HEK293T (cell line): ENCODE measurements at regions of chr1 and their contacts with region 1.

Region 1: DNA sequence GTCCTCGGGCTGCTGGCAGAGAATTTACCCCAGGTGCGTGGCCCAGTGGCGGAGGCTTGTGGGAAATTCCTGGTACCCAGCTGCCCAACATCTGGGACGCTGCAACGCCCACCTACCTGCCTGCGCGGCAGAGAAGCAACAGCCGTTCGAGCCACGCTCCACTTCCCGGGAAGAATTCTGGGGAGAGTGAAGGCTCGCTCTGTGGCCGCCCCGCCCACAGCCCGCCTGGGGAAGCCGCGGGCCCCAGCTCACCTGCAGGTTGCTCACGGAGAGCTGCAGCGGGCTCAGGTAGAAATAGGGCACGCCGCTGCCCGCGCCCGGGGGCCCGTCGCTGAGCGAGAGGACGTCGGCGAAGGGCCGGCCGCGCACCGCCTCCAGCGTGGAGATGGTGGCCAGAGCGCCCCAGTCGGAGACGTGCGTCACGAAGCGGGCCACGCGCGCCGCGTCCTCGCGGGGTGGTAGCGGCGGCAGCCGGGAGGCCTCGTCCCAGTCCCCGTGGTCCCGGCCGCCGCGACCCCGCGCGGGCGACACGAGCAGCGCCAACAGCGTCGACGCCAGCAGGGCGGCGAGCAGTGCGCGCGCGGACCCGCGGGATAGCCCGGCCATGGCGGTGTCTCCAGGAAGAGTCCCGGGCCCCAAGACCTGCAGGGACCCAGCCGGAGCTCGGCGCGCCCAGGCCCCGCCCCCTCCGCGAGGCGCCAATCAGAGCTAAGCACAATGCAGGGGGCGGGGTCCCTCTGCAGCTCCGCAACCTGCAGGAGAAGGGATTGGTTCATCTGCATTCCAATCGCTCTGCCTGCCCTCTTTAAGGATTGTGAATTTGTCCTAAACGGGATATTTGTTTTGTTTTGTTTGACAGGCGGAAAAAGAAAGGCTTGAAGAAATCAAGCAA is at the start of gene CREG1:
- DNase-seq: peak; percentile 98

Region 2: GRCh38 chr1:167454894-167455785 is 98.2 kb before region 1 on chr1:
- CTCF ChIA-PET with region 1: interaction called, 4 read pairs
- POLR2A ChIA-PET with region 1: interaction called, 12 read pairs
- DNase-seq: peak; percentile 68

Region 3: DNA sequence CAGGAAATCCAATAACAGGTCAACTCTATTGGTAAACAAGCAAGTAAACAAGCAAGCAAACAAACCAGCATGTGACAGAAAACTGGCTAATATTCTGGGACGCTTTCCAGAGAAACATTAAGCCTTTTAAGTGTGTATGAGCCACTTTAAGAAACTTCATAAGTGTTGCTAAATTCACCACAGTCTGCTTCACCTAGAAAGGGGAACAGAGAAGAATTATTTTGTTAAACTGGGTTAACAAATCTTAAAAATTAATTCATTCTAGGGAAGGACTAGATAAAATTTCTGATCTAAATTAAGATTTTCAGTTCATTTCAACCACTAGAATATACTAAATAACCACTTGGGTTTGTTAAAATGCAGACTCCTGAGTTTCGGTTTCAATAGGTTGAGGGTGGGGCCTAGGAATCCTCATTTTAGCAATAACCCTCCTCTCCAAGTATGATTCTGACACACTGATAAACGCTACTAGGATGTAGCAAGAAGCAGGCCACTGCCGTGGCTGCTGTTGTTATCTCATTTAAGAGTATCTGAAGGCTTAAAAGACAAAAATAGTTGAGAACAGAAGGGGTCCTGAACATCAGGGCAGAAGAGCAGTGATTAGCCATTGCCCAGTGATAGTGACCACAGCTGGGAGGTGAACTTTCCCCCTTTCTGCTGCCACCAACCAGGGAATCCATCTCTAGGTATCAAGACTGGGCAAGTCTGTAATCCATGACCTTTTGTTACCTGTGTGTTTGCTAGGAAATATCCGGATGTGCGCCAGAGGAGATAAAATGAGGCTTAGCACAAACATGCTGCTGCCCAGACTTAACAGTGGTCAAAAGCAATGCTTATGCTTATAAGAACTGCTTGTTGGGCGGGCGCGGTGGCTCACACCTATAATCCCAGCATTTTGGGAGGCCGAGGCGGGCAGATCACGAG is 11.0 kb before region 1 on chr1:
- CTCF ChIA-PET with region 1: interaction called, 11 read pairs
- POLR2A ChIA-PET with region 1: interaction called, 4 read pairs
- DNase-seq: no peak

Region 4: GRCh38 chr1:167563579-167564246 is 10.3 kb after region 1 on chr1:
- CTCF ChIA-PET with region 1: interaction called, 7 read pairs
- POLR2A ChIA-PET with region 1: interaction called, 16 read pairs
- DNase-seq: no peak

Region 5: GRCh38 chr1:167623951-167624350 is 70.6 kb after region 1 on chr1:
- CTCF ChIA-PET with region 1: no interaction called
- POLR2A ChIA-PET with region 1: no interaction called
- DNase-seq: no peak

Region 6: DNA sequence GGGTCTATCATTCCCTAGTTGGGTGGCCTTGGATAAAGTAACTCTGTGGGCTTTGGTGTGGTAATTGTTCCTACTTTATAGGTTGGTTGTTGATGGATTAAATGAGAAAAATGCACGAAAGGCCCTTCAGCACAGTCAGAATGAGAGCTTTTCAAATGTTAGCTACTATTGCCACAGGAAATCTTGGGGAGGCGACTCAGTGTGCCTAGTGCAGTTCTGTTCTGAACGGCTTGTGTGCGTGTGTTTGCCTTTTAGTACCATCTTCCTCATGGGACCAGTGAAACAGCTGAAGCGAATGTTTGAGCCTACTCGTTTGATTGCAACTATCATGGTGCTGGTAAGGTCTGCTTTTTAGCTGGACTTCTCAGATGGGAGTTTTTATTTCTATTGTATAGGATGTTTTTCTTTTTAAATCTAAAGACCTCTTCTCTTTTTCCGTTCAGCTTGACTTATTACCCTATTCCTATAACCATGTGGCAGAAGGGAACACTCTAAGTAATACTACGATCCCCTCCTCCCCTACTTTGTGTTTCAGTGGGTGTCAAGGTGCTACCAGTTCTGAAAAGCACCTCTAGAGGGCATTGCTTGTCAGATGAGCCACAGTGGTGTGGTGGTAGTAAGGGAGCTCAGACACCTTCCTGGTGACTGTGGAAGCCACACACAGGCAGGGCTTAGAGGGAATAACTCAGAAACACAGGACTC is 681.6 kb after region 1 on chr1:
- CTCF ChIA-PET with region 1: interaction called, 10 read pairs
- POLR2A ChIA-PET with region 1: no interaction called
- DNase-seq: peak; percentile 80